Activated T-helper 2 cell treated with anti-CD3 and anti-CD28 coated beads, Interferon-gamma antibody, Interleukin-2, Interleukin-4, amounts not matched to agents 10 μg/mL and 5 μg/mL and 100 μg/mL, durations not matched to agents 14 hours and 24 hours and 36 hours (primary cell): ENCODE measurements at regions of chr1 and their contacts with region 1.

Region 1: DNA sequence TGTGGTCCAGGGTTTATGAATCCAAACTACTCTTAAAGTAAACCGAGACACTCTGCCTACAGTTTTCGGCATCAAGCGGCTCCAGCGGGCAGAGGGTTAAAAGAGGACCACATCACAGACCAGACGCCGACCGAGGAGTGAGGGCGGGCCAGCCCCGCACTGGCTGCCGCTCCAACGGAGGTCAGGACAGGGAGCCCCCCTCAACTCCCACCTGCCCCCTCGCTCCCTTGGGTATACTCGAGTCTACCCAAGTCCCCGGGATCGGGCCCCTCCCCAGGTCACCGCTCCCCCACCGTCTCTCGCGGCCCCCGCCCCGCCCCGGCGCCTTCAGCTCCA is 312 bp downstream of the ARNT start:
- DNase-seq: no peak
- H3K4me3 Mint-ChIP-seq: peak overlapping the region; percentile 95
- H3K27ac Mint-ChIP-seq: peak overlapping the region; percentile 92
- H3K4me1 Mint-ChIP-seq: peaks cover 33% of the 10 kb centered on the region
- H3K27me3 Mint-ChIP-seq: no peaks in the 10 kb centered on the region

Region 2: DNA sequence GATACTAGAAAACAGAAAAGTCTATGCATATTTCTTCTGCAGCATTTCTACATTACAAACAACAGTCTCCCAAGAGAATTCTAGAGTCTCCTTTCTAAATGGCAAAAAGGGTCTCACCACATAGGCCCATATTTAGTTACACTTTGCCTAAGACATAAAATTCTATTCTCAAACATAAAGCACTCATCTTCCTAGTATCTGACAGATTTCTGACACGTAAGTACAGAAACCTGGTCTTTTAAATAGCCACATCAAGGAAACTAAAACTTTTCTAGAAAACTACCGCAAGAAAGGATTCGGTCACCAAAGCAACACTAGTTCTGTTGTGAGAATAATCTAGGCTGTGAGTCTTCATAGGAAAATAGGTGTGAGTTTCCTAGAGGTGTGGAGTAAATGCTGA is 34.5 kb before region 1 on chr1:
- intact Hi-C with region 1: loop called (anchors 5 kb)
- DNase-seq: no peak
- H3K4me3 Mint-ChIP-seq: no peak overlapping the region
- H3K27ac Mint-ChIP-seq: peak overlapping the region; percentile 72
- H3K4me1 Mint-ChIP-seq: peaks cover 33% of the 10 kb centered on the region
- H3K27me3 Mint-ChIP-seq: no peaks in the 10 kb centered on the region